Activated CD4-positive, alpha-beta T cell treated with anti-CD3 and anti-CD28 coated beads, Interleukin-2, amount 10 ng/mL, durations not matched to agents 24 days and 14 days (primary cell): ENCODE measurements at regions of chr2 and their contacts with region 1.

Region 1: GRCh38 chr2:190947711-190948251 is 66.2 kb downstream of the STAT1 start:
- DNase-seq: peak; percentile 69
- H3K4me3 Mint-ChIP-seq: peak overlapping the region; percentile 10
- H3K27ac Mint-ChIP-seq: peak overlapping the region; percentile 71
- H3K4me1 Mint-ChIP-seq: peaks cover 10% of the 10 kb centered on the region
- H3K27me3 Mint-ChIP-seq: no peaks in the 10 kb centered on the region

Region 2: GRCh38 chr2:190791347-190791975 is 156.3 kb before region 1 on chr2:
- intact Hi-C with region 1: loop called (anchors 5 kb)
- DNase-seq: no peak
- H3K4me3 Mint-ChIP-seq: peak overlapping the region; percentile 53
- H3K27ac Mint-ChIP-seq: peak overlapping the region; percentile 86
- H3K4me1 Mint-ChIP-seq: peaks cover 66% of the 10 kb centered on the region
- H3K27me3 Mint-ChIP-seq: no peaks in the 10 kb centered on the region

Region 3: DNA sequence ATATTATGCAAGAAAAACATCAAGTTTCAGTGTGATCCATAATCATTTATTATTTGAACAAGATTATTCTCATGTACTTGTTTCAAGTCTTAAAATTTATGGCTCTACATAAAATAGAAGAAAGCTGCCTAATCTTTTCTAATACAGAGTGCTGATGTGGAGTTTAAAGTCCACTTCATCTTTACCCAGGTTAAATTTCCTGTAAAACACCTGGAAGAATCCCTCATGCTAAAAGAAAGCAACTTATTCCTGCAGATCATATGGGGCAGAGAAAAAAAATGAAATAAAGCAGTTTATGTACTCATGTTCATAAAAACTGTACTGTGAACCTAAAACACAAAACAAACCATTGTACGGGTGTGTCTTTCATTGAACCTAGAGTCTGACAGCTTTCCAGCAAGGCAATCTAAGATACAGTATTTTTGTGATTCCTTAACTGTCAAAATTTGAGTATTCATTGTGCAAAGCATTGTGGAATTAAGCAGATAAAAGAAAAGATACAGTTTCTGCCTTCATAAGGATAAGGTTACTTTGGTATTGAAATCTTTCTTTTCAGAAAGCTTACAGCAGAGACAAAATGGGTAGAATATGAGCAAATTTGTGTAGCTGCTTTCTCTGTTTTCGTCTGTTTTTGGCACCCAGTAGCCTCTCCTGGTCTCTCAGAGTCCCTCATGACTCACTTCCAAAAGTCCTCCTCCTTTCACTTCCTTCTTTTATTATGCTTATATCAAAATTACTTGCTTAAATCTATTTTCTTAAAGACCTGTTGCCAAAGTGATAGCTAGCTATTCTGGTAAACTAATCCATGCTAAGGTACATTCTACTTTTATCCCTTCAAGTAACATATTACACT is 94.0 kb before region 1 on chr2:
- intact Hi-C with region 1: loop called (anchors 5 kb)
- DNase-seq: no peak
- H3K4me3 Mint-ChIP-seq: no peak overlapping the region
- H3K27ac Mint-ChIP-seq: no peak overlapping the region
- H3K4me1 Mint-ChIP-seq: peaks cover 4% of the 10 kb centered on the region
- H3K27me3 Mint-ChIP-seq: no peaks in the 10 kb centered on the region